Gastrocnemius medialis (tissue), 4 donors: ENCODE measurements at regions of chr16 and their contacts with region 1.

Region 1: DNA sequence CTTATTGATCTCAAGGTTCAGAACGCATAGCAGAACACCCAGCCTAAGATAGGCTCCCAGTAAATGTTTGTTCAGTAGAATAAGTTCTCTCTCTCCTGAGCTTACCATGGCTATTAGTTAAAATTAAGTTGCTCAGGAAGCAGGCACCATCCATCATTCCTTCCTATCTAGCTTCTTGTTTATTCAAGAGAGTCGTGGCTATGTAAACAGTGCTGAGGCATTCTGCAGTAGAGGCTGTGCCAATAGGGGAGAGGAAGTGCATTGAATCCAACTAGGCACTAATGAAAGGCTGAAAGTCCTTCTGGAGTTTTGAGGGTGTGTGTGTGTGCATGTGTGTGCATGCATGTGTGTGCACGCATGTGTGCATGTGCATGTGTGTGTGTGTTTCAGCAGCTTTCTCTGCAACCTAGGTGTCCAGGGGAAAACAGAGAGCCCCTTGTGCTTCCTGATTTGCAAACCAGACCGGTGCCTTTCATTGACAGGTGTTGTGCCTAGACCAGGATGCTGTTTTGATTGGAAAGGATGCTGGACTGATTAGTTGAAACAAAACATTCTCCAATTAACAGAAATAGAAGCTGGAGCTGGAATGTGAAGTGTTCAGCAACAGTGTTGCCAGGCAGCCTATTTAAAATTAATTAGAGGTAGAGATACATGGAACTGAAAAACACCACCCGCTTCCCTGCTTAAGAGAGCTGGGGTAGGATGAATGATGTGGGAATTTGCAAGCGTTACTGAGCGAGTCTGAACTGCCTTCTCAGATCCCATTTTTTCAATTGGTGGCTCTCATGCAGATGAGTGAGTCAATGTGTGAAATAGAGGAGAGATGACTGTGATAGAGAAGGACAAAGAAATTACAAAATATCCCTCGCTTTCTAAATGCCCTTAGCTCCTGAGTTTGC is 103.3 kb upstream of the CLEC3A start:
- DNase-seq: no peak
- ATAC-seq: no peak
- H3K4me3 ChIP-seq: no peak overlapping the region
- H3K27ac ChIP-seq: no peak overlapping the region
- H3K4me1 ChIP-seq: no peaks in the 10 kb centered on the region
- H3K27me3 ChIP-seq: no peaks in the 10 kb centered on the region
- CTCF ChIP-seq: no peak
- POLR2A ChIP-seq: no peak

Region 2: GRCh38 chr16:77816293-77816692 is 102.8 kb before region 1 on chr16:
- in situ Hi-C with region 1: loop called in 1 of 4 experiments (anchors 25 kb)
- intact Hi-C with region 1: no loop called
- DNase-seq: no peak
- ATAC-seq: no peak
- H3K4me3 ChIP-seq: no peak overlapping the region
- H3K27ac ChIP-seq: no peak overlapping the region
- H3K4me1 ChIP-seq: no peaks in the 10 kb centered on the region
- H3K27me3 ChIP-seq: no peaks in the 10 kb centered on the region
- CTCF ChIP-seq: no peak
- POLR2A ChIP-seq: no peak

Region 3: DNA sequence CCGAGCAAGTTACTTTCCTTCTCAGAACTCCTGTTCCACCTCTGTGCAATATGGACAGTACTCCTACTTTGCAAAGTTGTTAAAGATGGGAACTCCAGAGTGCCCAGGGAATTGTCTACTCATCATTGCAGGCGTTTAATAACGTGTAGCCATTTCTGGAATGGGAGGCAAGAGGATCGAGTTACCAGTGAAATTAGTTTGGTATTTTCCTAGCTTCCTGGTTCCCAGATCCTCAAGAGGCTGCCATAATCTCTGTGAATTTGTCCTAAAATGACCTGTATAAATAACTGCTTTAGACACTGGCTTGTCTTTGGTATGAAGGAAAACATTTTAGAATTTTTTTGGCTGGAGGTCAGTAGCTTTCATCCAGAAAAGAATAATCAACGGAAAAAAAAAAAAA is 208.1 kb after region 1 on chr16:
- in situ Hi-C with region 1: no loop called
- intact Hi-C with region 1: no loop called
- DNase-seq: no peak
- ATAC-seq: peak in 1 of 2 donors; percentile 24
- H3K4me3 ChIP-seq: peak overlapping the region in 1 of 4 donors; percentile 42
- H3K27ac ChIP-seq: peak overlapping the region in 2 of 4 donors; percentile 1 to 49
- H3K4me1 ChIP-seq: peaks cover 14 to 27% of the 10 kb centered on the region in 2 donors
- H3K27me3 ChIP-seq: no peaks in the 10 kb centered on the region
- CTCF ChIP-seq: no peak
- POLR2A ChIP-seq: no peak